Gastrocnemius medialis (tissue), 4 donors: ENCODE measurements at regions of chr3 and their contacts with region 1.

Region 1: DNA sequence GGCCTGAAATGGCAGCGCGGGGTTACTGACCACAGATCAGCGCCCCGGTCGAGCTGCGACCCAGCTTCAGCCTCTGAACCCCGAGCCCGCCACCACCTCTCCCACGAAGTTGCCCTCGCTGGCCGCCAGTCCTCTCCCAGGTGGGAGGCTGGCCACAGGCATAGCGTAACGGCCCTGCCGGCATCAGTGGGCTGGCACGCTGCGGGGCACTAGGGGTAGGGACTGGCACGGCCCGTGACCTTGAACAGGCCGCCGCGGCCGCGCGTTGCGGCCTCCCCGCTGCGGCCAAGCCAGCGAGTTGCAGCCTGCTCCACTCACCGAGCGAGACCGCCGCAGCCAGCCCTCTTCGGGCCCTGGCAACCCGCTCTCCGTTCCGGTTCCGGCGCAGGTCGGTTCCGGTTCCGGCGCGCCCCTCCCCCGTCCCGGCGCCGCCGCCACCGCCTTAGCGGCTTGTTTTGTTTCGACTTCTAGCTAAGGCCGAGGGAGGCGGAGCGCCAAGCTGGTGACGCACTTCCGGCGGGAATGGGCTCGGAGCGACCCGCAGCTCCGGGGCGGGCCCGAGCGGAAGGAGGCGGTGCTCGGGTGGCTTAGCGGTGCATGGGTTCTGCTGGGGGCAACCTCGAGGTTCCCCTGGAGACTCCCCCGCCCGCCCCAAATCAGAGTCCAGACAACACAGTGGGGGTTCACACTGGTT is at the start of gene USP19:
- DNase-seq: peak; percentile 93 to 97
- ATAC-seq: peak; percentile 91 to 93
- H3K4me3 ChIP-seq: peak within 1 kb of the TSS; percentile 77 to 100 (median 96)
- H3K27ac ChIP-seq: peak within 1 kb of the TSS; percentile 83 to 99 (median 95)
- H3K4me1 ChIP-seq: peaks cover 16 to 17% of the 10 kb centered on the region in 2 donors
- H3K27me3 ChIP-seq: no peaks in the 10 kb centered on the region
- CTCF ChIP-seq: no peak
- POLR2A ChIP-seq: peak; percentile 86 to 90
- total RNA-seq, gene USP19: 100 to 188 (median 128) TPM

Region 2: DNA sequence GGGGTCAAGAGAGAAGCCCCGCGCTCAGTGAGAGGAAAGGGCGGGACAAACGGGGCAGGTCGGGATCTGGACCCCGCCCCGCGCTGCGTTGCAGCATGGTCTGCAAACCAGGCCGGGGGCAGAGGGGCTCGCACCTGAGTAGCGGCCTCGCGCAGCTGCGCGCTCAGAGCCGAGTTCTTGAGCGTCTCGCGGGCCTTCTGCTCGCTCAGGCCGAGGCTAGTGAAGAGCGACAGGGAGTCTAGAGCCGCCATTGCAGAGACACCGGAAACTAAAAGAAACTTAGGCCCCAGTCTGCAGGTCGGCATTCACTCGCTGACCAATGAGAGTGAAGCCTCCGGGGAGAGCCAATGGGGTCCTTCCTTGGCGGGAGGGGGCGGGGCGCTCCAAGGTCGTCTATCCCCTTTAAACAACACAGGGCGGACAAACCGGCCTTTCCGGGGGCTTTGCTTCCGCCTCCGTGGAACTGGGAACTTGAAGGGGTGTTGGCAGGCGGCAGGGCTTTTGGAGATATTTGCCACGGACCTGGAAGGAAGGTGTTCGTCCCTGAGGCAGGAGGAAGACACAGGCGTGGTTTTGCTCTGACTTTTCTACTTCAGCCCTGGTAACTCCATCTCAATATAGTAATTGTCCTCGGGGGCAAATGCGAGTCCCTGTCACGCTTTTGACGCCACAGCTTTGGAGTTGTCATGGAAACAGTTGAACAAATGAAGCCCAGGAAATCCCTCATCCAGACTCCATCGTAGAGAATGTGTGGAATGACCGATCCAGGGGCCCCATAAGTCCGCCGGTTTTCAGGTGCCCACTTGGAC is 15.9 kb before region 1 on chr3 and contains the start of gene QARS1:
- in situ Hi-C with region 1: no loop called
- intact Hi-C with region 1: loop called (anchors 1 kb)
- DNase-seq: peak; percentile 93 to 95
- ATAC-seq: peak; percentile 98 to 99
- H3K4me3 ChIP-seq: peak within 1 kb of the TSS; percentile 82 to 94 (median 91)
- H3K27ac ChIP-seq: peak within 1 kb of the TSS; percentile 75 to 91 (median 86)
- H3K4me1 ChIP-seq: peaks cover 19 to 26% of the 10 kb centered on the region in 2 donors
- H3K27me3 ChIP-seq: no peaks in the 10 kb centered on the region
- CTCF ChIP-seq: no peak
- POLR2A ChIP-seq: peak; percentile 52 to 81
- total RNA-seq, gene QARS1: 157 to 259 (median 173) TPM

Region 3: GRCh38 chr3:49133226-49133951 is 12.8 kb after region 1 on chr3:
- in situ Hi-C with region 1: no loop called
- intact Hi-C with region 1: loop called (anchors 1 kb)
- DNase-seq: peak; percentile 76 to 83
- ATAC-seq: peak; percentile 85 to 87
- H3K4me3 ChIP-seq: peak overlapping the region; percentile 79 to 100 (median 90)
- H3K27ac ChIP-seq: peak overlapping the region; percentile 90 to 96 (median 94)
- H3K4me1 ChIP-seq: peaks cover 19 to 42% of the 10 kb centered on the region in 2 donors
- H3K27me3 ChIP-seq: no peaks in the 10 kb centered on the region
- CTCF ChIP-seq: peak in 1 of 5 experiments; percentile 20
- POLR2A ChIP-seq: no peak

Region 4: GRCh38 chr3:49181351-49181750 is 60.8 kb after region 1 on chr3:
- in situ Hi-C with region 1: no loop called
- intact Hi-C with region 1: no loop called
- DNase-seq: no peak
- ATAC-seq: no peak
- H3K4me3 ChIP-seq: no peak overlapping the region
- H3K27ac ChIP-seq: no peak overlapping the region
- H3K4me1 ChIP-seq: peaks cover 0 to 4% of the 10 kb centered on the region in 2 donors
- H3K27me3 ChIP-seq: no peaks in the 10 kb centered on the region
- CTCF ChIP-seq: no peak
- POLR2A ChIP-seq: no peak